PC-3 (cell line): ENCODE measurements at regions of chr1 and their contacts with region 1.

Region 1: GRCh38 chr1:112866151-112866550 is 89.8 kb downstream of the SLC16A1 start:
- DNase-seq: peak; percentile 93
- ATAC-seq: peak; percentile 93
- H3K4me3 ChIP-seq: no peak overlapping the region
- H3K27ac ChIP-seq: peak overlapping the region; percentile 64
- H3K4me1 ChIP-seq: peaks cover 37% of the 10 kb centered on the region
- H3K27me3 ChIP-seq: no peaks in the 10 kb centered on the region
- CTCF ChIP-seq: no peak

Region 2: GRCh38 chr1:112809253-112809684 is 56.9 kb before region 1 on chr1:
- CTCF ChIA-PET with region 1: no interaction called
- POLR2A ChIA-PET with region 1: no interaction called
- intact Hi-C with region 1: loop called (anchors 1 kb)
- DNase-seq: peak; percentile 86
- ATAC-seq: peak; percentile 92
- H3K4me3 ChIP-seq: no peak overlapping the region
- H3K27ac ChIP-seq: no peak overlapping the region
- H3K4me1 ChIP-seq: 0 out of 2 replicates have a peak, but pooled peaks cover 6% of the 10 kb centered on the region
- H3K27me3 ChIP-seq: no peaks in the 10 kb centered on the region
- CTCF ChIP-seq: peak; percentile 96

Region 3: GRCh38 chr1:112855152-112855828 is 10.9 kb before region 1 on chr1:
- CTCF ChIA-PET with region 1: no interaction called
- POLR2A ChIA-PET with region 1: interaction called, 22 read pairs
- intact Hi-C with region 1: no loop called
- DNase-seq: no peak
- ATAC-seq: no peak
- H3K4me3 ChIP-seq: no peak overlapping the region
- H3K27ac ChIP-seq: no peak overlapping the region
- H3K4me1 ChIP-seq: peaks cover 12% of the 10 kb centered on the region; the same call in 1 of the 2 replicates
- H3K27me3 ChIP-seq: no peaks in the 10 kb centered on the region
- CTCF ChIP-seq: no peak

Region 4: GRCh38 chr1:112893288-112894009 is 27.3 kb after region 1 on chr1:
- CTCF ChIA-PET with region 1: interaction called, 11 read pairs
- POLR2A ChIA-PET with region 1: no interaction called
- intact Hi-C with region 1: no loop called
- DNase-seq: no peak
- ATAC-seq: no peak
- H3K4me3 ChIP-seq: no peak overlapping the region
- H3K27ac ChIP-seq: no peak overlapping the region
- H3K4me1 ChIP-seq: no peaks in the 10 kb centered on the region
- H3K27me3 ChIP-seq: no peaks in the 10 kb centered on the region
- CTCF ChIP-seq: no peak